A673 (cell line): ENCODE measurements at regions of chr4 and their contacts with region 1.

Region 1: GRCh38 chr4:120902925-120903324 is 19.6 kb downstream of the PRDM5 start:
- DNase-seq: no peak
- H3K4me3 ChIP-seq: no peak overlapping the region
- H3K27ac ChIP-seq: no peak overlapping the region
- H3K4me1 ChIP-seq: no peaks in the 10 kb centered on the region
- H3K27me3 ChIP-seq: no peaks in the 10 kb centered on the region
- CTCF ChIP-seq: no peak

Region 2: DNA sequence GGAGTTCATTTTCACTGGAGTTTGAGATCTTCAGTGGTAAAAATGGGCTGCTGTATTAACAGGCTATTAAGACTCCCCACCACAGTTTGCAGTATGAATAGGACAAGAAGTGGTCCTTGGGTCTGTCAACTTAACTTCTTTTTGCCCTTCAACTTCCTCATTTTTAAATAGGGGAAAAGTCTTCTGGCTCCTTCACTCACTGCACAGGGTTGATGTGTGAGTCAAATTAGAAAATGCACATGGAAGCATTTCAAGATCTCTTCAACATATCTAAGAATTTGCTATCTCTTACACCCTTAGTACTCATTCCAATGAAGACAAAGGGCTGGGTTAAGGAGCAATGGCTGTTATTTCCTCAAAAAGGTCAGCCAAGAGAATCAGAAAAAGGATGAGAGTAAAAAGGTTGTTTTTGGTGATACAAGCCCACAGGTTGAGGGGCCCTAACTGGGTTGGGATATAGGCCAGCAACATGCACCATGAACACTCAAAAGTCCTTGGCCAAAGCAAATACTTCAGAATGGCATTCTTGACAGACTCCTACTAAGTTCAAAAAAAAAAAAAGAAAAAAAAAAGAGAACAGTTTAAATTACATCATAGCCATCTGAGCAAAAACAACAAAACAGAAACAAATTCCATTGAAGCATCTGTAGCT is 1287.7 kb before region 1 on chr4:
- CTCF ChIA-PET with region 1: no interaction called
- POLR2A ChIA-PET with region 1: no interaction called
- intact Hi-C with region 1: loop called (anchors 5 kb)
- DNase-seq: no peak
- H3K4me3 ChIP-seq: no peak overlapping the region
- H3K27ac ChIP-seq: no peak overlapping the region
- H3K4me1 ChIP-seq: no peaks in the 10 kb centered on the region
- H3K27me3 ChIP-seq: no peaks in the 10 kb centered on the region
- CTCF ChIP-seq: no peak

Region 3: DNA sequence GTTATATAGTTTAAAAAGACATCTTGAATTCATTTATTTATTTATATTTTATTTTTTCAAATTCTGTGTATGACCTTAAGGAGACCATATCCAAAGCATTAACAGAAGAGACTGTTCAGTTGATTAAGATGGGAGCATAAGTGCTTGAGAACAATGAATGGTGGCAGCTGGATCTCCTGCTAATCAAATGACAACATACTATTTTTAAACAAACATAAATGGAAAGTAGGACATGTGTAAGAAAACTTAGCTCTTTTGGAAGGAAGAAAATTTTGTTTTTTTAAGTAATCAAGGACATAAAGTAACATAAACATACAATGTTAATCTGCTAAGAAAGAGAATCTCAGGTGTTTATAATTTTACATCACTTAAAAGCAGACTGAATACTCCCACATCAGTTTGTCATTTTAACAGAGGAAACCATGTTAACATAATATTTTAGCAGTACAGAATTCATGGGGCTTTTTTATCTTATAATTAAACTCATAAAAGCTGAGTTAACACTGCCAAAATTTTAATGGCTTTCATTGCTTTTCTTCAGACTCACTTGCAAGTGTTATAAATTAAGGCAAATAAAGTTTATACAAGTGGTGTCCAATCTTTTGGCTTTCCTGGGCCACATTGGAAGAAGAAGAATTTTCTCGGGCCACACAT is 931.4 kb before region 1 on chr4:
- CTCF ChIA-PET with region 1: no interaction called
- POLR2A ChIA-PET with region 1: no interaction called
- intact Hi-C with region 1: no loop called
- DNase-seq: no peak
- H3K4me3 ChIP-seq: no peak overlapping the region
- H3K27ac ChIP-seq: no peak overlapping the region
- H3K4me1 ChIP-seq: no peaks in the 10 kb centered on the region
- H3K27me3 ChIP-seq: no peaks in the 10 kb centered on the region
- CTCF ChIP-seq: no peak